CD4-positive, alpha-beta T cell (primary cell): ENCODE measurements at regions of chr6 and their contacts with region 1.

Region 1: DNA sequence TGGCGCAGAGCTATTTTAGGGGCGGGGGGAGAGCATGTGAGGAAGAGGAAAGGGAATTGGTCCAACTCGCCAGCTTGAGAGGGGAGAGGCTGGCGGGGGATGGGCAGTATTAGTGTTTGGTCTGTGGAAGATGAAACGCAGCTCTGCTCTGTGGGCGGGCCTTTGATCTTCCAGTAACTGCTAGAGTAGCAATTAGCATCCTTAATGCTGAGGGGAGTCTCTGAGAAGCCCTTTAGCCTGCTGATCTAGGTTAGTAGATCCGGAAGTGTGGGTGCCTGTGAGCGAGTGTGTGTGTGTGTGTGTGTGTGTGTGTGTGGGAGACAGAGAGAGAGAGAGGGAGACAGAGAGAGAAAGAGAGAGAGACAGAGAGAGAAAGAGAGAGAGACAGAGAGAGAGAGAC is 117.2 kb upstream of the BACH2 start:
- DNase-seq: peak; percentile 56 to 93 (median 66)
- ATAC-seq: peak; percentile 79
- H3K4me3 ChIP-seq: peak overlapping the region; percentile 35
- H3K4me3 Mint-ChIP-seq: peak overlapping the region; percentile 85
- H3K27ac ChIP-seq: no peak overlapping the region
- H3K27ac Mint-ChIP-seq: peak overlapping the region; percentile 90
- H3K4me1 ChIP-seq: peaks cover 42% of the 10 kb centered on the region
- H3K4me1 Mint-ChIP-seq: peaks cover 37% of the 10 kb centered on the region
- H3K27me3 ChIP-seq: no peaks in the 10 kb centered on the region
- H3K27me3 Mint-ChIP-seq: peaks cover 5% of the 10 kb centered on the region
- CTCF ChIP-seq: no peak

Region 2: GRCh38 chr6:90403489-90404381 is 10.1 kb before region 1 on chr6:
- CTCF ChIA-PET with region 1: interaction called, 13 read pairs
- POLR2A ChIA-PET with region 1: interaction called, 29 read pairs
- intact Hi-C with region 1: no loop called
- DNase-seq: no peak
- ATAC-seq: no peak
- H3K4me3 ChIP-seq: no peak overlapping the region
- H3K4me3 Mint-ChIP-seq: no peak overlapping the region
- H3K27ac ChIP-seq: no peak overlapping the region
- H3K27ac Mint-ChIP-seq: peak overlapping the region; percentile 86
- H3K4me1 ChIP-seq: peaks cover 49% of the 10 kb centered on the region
- H3K4me1 Mint-ChIP-seq: peaks cover 42% of the 10 kb centered on the region
- H3K27me3 ChIP-seq: no peaks in the 10 kb centered on the region
- H3K27me3 Mint-ChIP-seq: no peaks in the 10 kb centered on the region
- CTCF ChIP-seq: no peak

Region 3: DNA sequence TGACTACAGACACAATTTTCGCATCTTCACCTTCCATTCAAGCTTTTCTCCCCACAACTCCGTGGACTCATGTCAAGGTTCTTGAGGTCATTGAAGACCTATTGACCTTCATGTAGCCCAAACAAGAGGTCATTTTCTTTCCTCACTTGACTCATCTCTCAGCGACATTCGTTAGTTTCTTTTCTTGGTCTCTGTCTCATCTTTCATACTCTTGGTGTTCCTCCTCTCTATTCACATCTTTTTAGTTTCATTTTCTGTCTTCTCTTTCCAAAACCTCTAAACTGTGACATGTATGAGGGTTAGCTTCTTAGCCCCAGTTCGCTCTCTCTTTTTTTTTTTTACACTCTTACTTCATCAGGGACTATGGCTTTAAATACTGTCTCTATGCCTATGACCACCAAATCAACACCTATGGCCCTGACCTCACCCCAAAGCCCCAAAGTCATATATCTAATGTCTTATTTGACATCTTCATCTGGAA is 11.3 kb after region 1 on chr6:
- CTCF ChIA-PET with region 1: interaction called, 3 read pairs
- POLR2A ChIA-PET with region 1: interaction called, 34 read pairs
- intact Hi-C with region 1: no loop called
- DNase-seq: peak in 4 of 14 experiments; percentile 3 to 76 (median 46)
- ATAC-seq: peak; percentile 79
- H3K4me3 ChIP-seq: peak overlapping the region; percentile 15
- H3K4me3 Mint-ChIP-seq: peak overlapping the region; percentile 64
- H3K27ac ChIP-seq: peak overlapping the region in 1 of 2 donors; percentile 56
- H3K27ac Mint-ChIP-seq: peak overlapping the region; percentile 81
- H3K4me1 ChIP-seq: peaks cover 4% of the 10 kb centered on the region
- H3K4me1 Mint-ChIP-seq: peaks cover 21% of the 10 kb centered on the region
- H3K27me3 ChIP-seq: no peaks in the 10 kb centered on the region
- H3K27me3 Mint-ChIP-seq: no peaks in the 10 kb centered on the region
- CTCF ChIP-seq: no peak

Region 4: GRCh38 chr6:90466154-90466940 is 52.5 kb after region 1 on chr6:
- CTCF ChIA-PET with region 1: no interaction called
- POLR2A ChIA-PET with region 1: no interaction called
- intact Hi-C with region 1: loop called (anchors 5 kb)
- DNase-seq: peak in 1 of 14 experiments; percentile 23
- ATAC-seq: no peak
- H3K4me3 ChIP-seq: no peak overlapping the region
- H3K4me3 Mint-ChIP-seq: no peak overlapping the region
- H3K27ac ChIP-seq: no peak overlapping the region
- H3K27ac Mint-ChIP-seq: no peak overlapping the region
- H3K4me1 ChIP-seq: peaks cover 29% of the 10 kb centered on the region
- H3K4me1 Mint-ChIP-seq: peaks cover 58% of the 10 kb centered on the region
- H3K27me3 ChIP-seq: no peaks in the 10 kb centered on the region
- H3K27me3 Mint-ChIP-seq: no peaks in the 10 kb centered on the region
- CTCF ChIP-seq: no peak